ENCODE measurements at regions of chr12 and their contacts with region 1.

Region 1: DNA sequence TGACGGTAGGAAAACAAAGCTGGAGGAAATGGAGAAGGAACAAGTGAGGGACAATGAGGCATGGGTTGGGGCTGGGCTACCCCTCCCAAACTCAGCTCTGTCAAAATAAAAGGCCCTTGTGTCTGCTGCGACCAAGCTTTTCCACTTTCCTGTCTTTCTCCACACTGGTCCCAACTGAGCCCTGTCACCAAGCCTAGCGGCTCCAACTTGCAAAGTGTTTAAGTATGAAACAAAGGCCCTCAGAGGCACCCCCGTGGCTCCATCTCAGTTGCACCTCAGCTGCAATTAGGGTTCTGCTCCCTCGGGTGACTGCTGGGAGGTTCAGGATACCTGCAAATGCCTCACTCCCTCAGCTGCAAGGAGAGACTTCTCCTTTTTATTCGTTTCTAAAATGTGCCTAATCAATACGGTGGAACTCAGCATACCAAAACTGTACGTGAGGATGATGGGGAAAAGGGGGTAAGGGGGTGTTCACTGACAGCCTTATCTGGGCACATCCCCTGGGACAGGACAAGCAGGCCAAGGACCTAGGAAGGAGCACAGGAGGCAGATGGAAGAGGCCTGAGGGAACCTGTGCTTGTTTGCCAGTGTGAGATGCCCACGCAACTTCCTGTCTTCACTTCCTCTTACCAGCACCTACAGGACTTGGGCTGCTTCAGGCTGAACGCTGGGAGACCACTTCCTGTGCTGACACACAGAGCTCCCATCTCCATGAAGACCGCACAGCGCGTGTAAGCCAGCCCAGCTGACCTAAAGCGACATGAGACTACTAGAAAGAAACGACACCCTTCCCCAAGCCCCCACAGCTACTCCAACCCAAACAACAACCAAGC is 8.9 kb downstream of the VAMP1 start:
- DNase-seq: peak; percentile 94
- ATAC-seq: peak; percentile 87
- H3K4me3 ChIP-seq: peak overlapping the region in 2 of 5 experiments; percentile 20 to 23
- H3K4me3 Mint-ChIP-seq: peak overlapping the region; percentile 72
- H3K27ac ChIP-seq: peak overlapping the region; percentile 89 to 93
- H3K27ac Mint-ChIP-seq: peak overlapping the region; percentile 98
- H3K4me1 ChIP-seq: peaks cover 67 to 93% of the 10 kb centered on the region in 2 donors
- H3K4me1 Mint-ChIP-seq: peaks cover 86% of the 10 kb centered on the region
- H3K27me3 ChIP-seq: no peaks in the 10 kb centered on the region
- H3K27me3 Mint-ChIP-seq: no peaks in the 10 kb centered on the region
- CTCF ChIP-seq: no peak

Region 2: GRCh38 chr12:6443361-6443983 is 18.1 kb before region 1 on chr12:
- CTCF ChIA-PET with region 1: interaction called, 115 read pairs
- POLR2A ChIA-PET with region 1: interaction called, 52 read pairs
- intact Hi-C with region 1: loop called (anchors 1 kb)
- DNase-seq: peak; percentile 60
- ATAC-seq: peak; percentile 34
- H3K4me3 ChIP-seq: peak overlapping the region in 2 of 5 experiments; percentile 17 to 46
- H3K4me3 Mint-ChIP-seq: peak overlapping the region; percentile 92
- H3K27ac ChIP-seq: peak overlapping the region; percentile 62 to 78
- H3K27ac Mint-ChIP-seq: peak overlapping the region; percentile 92
- H3K4me1 ChIP-seq: peaks cover 44 to 57% of the 10 kb centered on the region in 2 donors
- H3K4me1 Mint-ChIP-seq: peaks cover 63% of the 10 kb centered on the region
- H3K27me3 ChIP-seq: no peaks in the 10 kb centered on the region
- H3K27me3 Mint-ChIP-seq: no peaks in the 10 kb centered on the region
- CTCF ChIP-seq: no peak

Region 3: DNA sequence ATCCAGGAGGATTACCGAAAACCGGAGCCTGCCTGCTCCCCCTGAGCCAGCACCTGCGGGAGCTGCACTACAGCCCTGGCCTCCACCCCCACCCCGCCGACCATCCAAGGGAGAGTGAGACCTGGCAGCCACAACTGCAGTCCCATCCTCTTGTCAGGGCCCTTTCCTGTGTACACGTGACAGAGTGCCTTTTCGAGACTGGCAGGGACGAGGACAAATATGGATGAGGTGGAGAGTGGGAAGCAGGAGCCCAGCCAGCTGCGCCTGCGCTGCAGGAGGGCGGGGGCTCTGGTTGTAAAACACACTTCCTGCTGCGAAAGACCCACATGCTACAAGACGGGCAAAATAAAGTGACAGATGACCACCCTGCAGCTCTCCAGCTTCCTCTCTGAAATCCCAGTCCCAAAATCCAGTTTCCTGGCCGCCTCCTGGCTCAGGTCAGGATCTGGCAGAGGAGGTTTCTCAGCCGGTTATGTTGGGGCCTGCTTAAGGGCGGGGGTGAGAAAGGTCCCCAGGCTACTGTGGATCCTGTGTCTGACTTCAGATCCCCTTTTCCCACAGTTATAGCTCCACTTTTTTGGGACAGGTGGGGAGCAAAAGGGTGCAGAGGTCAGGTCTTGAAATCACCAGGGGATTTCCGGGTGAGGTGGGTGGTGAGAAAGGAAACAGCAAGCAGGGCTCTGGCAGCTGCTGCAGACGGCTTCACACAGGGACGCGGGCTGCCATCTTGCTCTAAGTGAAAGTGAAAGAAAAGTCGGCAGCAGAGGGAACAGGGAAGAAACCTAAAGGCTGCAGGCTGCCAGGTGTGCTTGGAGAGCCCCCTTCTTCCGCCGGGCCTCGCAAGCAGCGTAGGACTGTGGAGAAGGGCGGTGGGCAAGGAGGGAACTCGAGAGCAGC is 10.0 kb before region 1 on chr12 and contains the start of gene TAPBPL:
- CTCF ChIA-PET with region 1: interaction called, 115 read pairs
- POLR2A ChIA-PET with region 1: interaction called, 54 read pairs
- intact Hi-C with region 1: loop called (anchors 1 kb)
- DNase-seq: peak; percentile 91
- ATAC-seq: peak; percentile 81
- H3K4me3 ChIP-seq: peak within 1 kb of the TSS; percentile 86 to 97 (median 94)
- H3K4me3 Mint-ChIP-seq: peak within 1 kb of the TSS; percentile 97
- H3K27ac ChIP-seq: peak within 1 kb of the TSS; percentile 96 to 98
- H3K27ac Mint-ChIP-seq: peak within 1 kb of the TSS; percentile 99
- H3K4me1 ChIP-seq: peaks cover 33 to 55% of the 10 kb centered on the region in 2 donors
- H3K4me1 Mint-ChIP-seq: peaks cover 64% of the 10 kb centered on the region
- H3K27me3 ChIP-seq: no peaks in the 10 kb centered on the region
- H3K27me3 Mint-ChIP-seq: no peaks in the 10 kb centered on the region
- CTCF ChIP-seq: no peak
- total RNA-seq, gene TAPBPL: 71.2 and 80.5 TPM in 2 replicates

Measured in B cell (primary cell).